CD8-positive, alpha-beta memory T cell (primary cell): ENCODE measurements at regions of chr5 and their contacts with region 1.

Region 1: GRCh38 chr5:172179361-172179989 is 8.5 kb downstream of the STK10 start:
- DNase-seq: peak; percentile 44 to 73 (median 59)
- H3K4me3 ChIP-seq: peak overlapping the region; percentile 86
- H3K4me3 Mint-ChIP-seq: peak overlapping the region; percentile 86 to 96 (median 93)
- H3K27ac ChIP-seq: peak overlapping the region; percentile 94
- H3K27ac Mint-ChIP-seq: peak overlapping the region; percentile 97 to 100 (median 98)
- H3K4me1 ChIP-seq: peaks cover 94% of the 10 kb centered on the region
- H3K4me1 Mint-ChIP-seq: peaks cover 82 to 95% (median 95%) of the 10 kb centered on the region in 3 donors
- H3K27me3 ChIP-seq: no peaks in the 10 kb centered on the region
- H3K27me3 Mint-ChIP-seq: no peaks in the 10 kb centered on the region

Region 2: GRCh38 chr5:172071289-172071875 is 108.1 kb before region 1 on chr5:
- CTCF ChIA-PET with region 1: no interaction called
- POLR2A ChIA-PET with region 1: interaction called, 12 read pairs
- DNase-seq: peak in 1 of 5 donors; percentile 30
- H3K4me3 ChIP-seq: no peak overlapping the region
- H3K4me3 Mint-ChIP-seq: peak overlapping the region in 5 of 7 donors; percentile 1 to 26 (median 6)
- H3K27ac ChIP-seq: no peak overlapping the region
- H3K27ac Mint-ChIP-seq: peak overlapping the region; percentile 21 to 78 (median 66)
- H3K4me1 ChIP-seq: peaks cover 49% of the 10 kb centered on the region
- H3K4me1 Mint-ChIP-seq: peaks cover 53 to 65% (median 62%) of the 10 kb centered on the region in 3 donors
- H3K27me3 ChIP-seq: no peaks in the 10 kb centered on the region
- H3K27me3 Mint-ChIP-seq: no peaks in the 10 kb centered on the region

Region 3: DNA sequence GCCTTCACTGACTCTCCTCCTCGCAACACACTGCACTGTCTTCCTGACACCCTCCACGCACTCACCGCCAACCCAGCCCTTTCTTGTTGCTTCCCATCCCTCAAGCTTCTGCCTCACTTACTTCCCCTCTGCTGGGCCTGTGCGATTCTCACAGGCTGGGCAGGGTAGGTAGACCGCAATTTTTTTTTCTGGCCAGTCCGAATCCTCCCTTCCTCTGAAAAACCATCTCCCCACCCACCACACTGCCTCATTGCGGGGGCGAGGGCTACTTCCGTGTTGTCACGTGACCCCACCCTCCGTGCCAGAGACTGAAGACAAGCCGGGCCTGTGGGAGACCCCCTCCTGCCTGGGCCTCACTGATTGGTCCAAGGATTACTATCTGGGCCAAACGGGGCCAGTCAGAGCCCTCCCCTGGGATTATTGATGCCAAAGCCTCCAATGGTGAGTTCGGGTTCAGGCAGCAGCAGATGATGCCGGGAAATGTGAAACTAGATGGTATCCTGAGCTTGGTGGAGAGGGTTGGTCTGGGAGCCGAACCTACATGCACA is 64.5 kb before region 1 on chr5:
- CTCF ChIA-PET with region 1: interaction called, 177 read pairs
- POLR2A ChIA-PET with region 1: interaction called, 42 read pairs
- DNase-seq: peak; percentile 37 to 85 (median 71)
- H3K4me3 ChIP-seq: peak overlapping the region; percentile 40
- H3K4me3 Mint-ChIP-seq: peak overlapping the region; percentile 65 to 92 (median 78)
- H3K27ac ChIP-seq: peak overlapping the region; percentile 48
- H3K27ac Mint-ChIP-seq: peak overlapping the region; percentile 83 to 100 (median 96)
- H3K4me1 ChIP-seq: peaks cover 86% of the 10 kb centered on the region
- H3K4me1 Mint-ChIP-seq: peaks cover 73 to 90% (median 89%) of the 10 kb centered on the region in 3 donors
- H3K27me3 ChIP-seq: no peaks in the 10 kb centered on the region
- H3K27me3 Mint-ChIP-seq: peaks cover 0 to 4% of the 10 kb centered on the region in 2 donors

Region 4: GRCh38 chr5:172156541-172156994 is 22.9 kb before region 1 on chr5:
- CTCF ChIA-PET with region 1: interaction called, 20 read pairs
- POLR2A ChIA-PET with region 1: interaction called, 3 read pairs
- DNase-seq: peak in 1 of 5 donors; percentile 18
- H3K4me3 ChIP-seq: no peak overlapping the region
- H3K4me3 Mint-ChIP-seq: no peak overlapping the region
- H3K27ac ChIP-seq: no peak overlapping the region
- H3K27ac Mint-ChIP-seq: peak overlapping the region; percentile 46 to 84 (median 82)
- H3K4me1 ChIP-seq: peaks cover 71% of the 10 kb centered on the region
- H3K4me1 Mint-ChIP-seq: peaks cover 70 to 87% (median 83%) of the 10 kb centered on the region in 3 donors
- H3K27me3 ChIP-seq: no peaks in the 10 kb centered on the region
- H3K27me3 Mint-ChIP-seq: no peaks in the 10 kb centered on the region

Region 5: DNA sequence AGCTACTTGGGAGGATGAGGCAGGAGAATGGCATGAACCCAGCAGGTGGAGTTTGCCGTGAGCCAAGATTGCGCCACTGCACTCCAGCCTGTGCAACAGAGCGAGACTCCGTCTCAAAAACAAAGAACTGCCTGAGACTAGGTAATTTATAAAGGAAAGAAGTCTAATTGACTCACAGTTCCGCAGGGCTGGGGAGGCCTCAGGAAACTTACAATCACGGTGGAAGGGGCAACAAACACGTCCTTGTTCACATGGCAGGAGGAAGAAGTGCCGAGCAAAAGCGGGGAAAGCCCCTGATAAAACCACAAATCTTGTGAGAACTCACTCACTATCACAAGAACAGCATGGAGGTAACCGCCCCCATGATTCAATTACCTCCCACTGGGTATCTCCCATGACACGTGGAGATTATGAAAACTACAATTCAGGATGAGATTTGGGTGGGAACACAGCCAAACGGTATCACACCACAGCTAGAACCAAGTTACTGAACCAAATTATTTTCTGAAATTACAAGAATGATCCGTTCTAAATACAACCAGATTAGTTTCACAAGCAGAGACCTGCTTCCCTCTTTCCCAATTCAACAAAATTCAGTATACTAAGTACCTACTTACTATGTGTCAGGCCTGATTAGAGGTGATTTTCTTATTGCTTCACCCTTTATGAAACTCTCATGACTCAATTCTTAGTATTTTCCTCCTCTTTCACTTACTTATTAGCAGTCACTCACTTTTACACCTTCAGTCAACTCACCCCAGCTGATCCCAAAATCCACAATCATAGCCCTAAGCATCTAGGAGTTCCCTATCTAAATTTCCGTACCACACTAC is 95.7 kb after region 1 on chr5:
- CTCF ChIA-PET with region 1: no interaction called
- POLR2A ChIA-PET with region 1: no interaction called
- DNase-seq: peak in 4 of 5 donors; percentile 18 to 58 (median 24)
- H3K4me3 ChIP-seq: no peak overlapping the region
- H3K4me3 Mint-ChIP-seq: peak overlapping the region in 3 of 7 donors; percentile 1 to 29 (median 1)
- H3K27ac ChIP-seq: no peak overlapping the region
- H3K27ac Mint-ChIP-seq: peak overlapping the region in 4 of 8 donors; percentile 6 to 76 (median 36)
- H3K4me1 ChIP-seq: no peaks in the 10 kb centered on the region
- H3K4me1 Mint-ChIP-seq: peaks cover 13 to 29% (median 23%) of the 10 kb centered on the region in 3 donors
- H3K27me3 ChIP-seq: no peaks in the 10 kb centered on the region
- H3K27me3 Mint-ChIP-seq: no peaks in the 10 kb centered on the region

Region 6: GRCh38 chr5:172973127-172973916 is 793.8 kb after region 1 on chr5:
- CTCF ChIA-PET with region 1: no interaction called
- POLR2A ChIA-PET with region 1: no interaction called
- DNase-seq: no peak
- H3K4me3 ChIP-seq: no peak overlapping the region
- H3K4me3 Mint-ChIP-seq: no peak overlapping the region
- H3K27ac ChIP-seq: no peak overlapping the region
- H3K27ac Mint-ChIP-seq: no peak overlapping the region
- H3K4me1 ChIP-seq: no peaks in the 10 kb centered on the region
- H3K4me1 Mint-ChIP-seq: no peaks in the 10 kb centered on the region
- H3K27me3 ChIP-seq: no peaks in the 10 kb centered on the region
- H3K27me3 Mint-ChIP-seq: peaks cover 0 to 12% of the 10 kb centered on the region in 2 donors